Cardiac septum (tissue), 1 donor: ENCODE measurements at regions of chr7 and their contacts with region 1.

Region 1: DNA sequence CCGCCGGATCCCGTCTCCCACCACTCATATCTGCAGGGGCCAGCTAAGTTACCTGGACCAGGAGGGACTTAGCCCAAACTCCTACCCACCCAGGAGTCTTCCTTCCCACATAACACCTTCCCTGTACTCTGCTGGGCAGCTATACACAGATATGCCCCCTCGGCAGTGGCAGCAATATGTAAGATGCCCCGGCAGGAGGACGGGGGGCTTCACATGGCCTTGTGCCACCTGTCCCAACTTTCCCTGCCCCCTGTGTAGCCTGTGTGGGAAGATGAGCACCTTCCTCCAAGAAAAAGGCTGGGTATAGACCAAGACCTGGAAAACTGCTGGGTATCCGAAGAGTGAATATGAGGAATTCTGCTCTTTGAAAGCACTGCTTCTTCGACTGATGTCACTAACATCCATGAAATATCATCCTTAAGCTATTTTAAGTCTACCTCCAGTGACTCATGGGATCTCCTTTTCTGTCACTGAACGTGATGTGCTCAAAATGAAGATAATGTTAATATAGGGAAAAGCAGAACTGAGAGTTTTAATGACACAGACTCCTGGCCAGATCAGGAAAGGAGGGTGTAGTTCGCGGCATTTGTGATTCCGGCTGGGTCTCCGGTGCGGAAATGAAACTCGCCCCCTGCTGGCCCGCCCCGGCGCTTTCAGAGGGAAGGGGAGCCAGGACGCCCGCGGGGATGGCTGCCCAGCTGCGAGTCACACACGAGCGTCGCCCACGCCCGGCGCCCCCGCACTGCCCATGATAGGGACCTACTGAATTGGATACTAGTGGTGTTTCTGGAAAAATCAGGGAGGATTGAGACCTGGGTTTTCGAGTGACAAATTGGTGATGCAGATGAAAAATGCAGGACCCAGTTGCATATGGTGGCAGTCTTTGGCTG is 256.9 kb upstream of the NFE2L3 start:
- DNase-seq: peak; percentile 81

Region 2: DNA sequence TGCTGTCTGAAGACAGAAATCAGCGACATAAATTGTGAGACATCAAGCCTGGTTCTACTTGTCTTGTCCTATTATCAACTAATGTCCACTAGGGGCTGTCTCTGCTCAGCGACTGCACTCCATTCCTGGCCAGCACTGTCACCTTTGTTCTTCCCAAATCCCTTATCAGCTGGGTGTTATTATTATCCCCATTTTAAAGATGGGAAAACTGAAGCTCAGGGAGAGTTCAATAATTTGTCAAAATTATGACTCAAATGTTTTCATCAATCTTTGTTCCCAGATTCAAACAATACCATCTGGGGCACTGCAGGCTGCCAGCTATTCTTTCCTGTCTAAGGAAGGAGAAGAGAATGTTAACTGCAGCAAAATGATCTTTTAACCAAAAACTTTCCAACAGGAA is 174.7 kb before region 1 on chr7:
- intact Hi-C with region 1: no loop called
- DNase-seq: no peak

Region 3: DNA sequence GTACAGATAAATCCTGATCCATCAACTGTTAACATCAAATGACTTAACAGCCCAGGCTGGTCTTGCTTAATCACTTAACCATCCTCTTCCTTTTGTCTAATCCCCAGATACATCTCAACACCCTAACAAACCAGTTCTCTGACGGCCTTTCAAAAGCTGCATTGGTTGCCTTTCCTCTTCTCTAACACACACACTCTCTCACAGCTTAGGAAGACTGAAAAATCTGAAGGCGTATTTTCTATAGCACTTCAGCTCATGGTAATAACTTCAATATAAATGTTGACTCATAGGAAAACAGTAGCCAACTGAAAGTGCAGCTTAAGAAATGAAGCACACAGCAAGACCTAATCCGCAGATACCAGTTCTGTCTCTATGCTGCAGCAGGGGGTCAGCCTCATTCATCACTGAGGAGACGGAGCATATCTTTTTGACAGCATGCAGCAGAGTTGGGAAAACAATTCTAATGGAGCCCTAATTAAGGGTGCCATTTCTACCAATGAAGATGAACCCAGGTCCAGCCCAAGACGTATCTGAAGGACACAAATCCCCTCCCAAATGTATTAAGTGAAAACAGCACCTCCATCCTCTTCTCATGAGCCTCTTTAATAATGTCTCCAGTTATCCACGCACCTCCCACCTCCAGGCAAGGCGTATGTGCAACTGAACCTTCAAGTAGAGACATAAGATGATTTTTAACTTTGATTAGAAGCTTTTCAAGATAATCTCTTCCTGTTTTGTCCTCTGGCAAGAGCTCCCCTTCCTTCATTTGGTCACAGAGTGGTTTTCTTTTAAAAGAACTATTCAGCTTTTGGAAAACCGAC is 45.1 kb after region 1 on chr7:
- intact Hi-C with region 1: no loop called
- DNase-seq: no peak

Region 4: GRCh38 chr7:26061688-26062150 is 166.6 kb after region 1 on chr7:
- intact Hi-C with region 1: loop called (anchors 2 kb)
- DNase-seq: no peak

Region 5: GRCh38 chr7:26667500-26668133 is 772.5 kb after region 1 on chr7:
- intact Hi-C with region 1: loop called (anchors 5 kb)
- DNase-seq: no peak